ENCODE measurements at regions of chr12 and their contacts with region 1.

Region 1: DNA sequence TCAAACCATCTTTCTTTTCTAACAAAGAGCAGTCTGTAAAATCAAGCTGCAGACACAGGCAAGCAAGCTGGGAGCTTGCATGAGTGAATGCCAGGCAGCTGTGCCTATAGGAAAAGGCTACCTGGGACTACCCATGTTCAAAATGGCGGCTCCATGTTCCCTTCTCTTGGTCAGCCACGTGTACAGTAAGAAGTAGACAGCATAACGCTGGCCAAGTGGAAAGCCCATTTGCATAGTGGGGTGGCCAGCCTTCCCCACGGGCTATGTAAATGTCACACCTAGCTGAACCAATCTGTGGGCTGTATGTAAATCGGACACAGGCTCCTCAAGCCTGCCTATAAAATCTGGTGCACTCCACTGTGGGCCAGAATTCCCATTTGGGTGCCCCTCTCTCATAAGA is 117.1 kb downstream of the SYT10 start:
- DNase-seq: no peak
- ATAC-seq: no peak
- H3K4me3 ChIP-seq: no peak overlapping the region
- H3K4me3 Mint-ChIP-seq: no peak overlapping the region
- H3K27ac ChIP-seq: no peak overlapping the region
- H3K27ac Mint-ChIP-seq: no peak overlapping the region
- H3K4me1 ChIP-seq: no peaks in the 10 kb centered on the region
- H3K4me1 Mint-ChIP-seq: no peaks in the 10 kb centered on the region
- H3K27me3 ChIP-seq: no peaks in the 10 kb centered on the region
- H3K27me3 Mint-ChIP-seq: no peaks in the 10 kb centered on the region
- CTCF ChIP-seq: no peak

Region 2: DNA sequence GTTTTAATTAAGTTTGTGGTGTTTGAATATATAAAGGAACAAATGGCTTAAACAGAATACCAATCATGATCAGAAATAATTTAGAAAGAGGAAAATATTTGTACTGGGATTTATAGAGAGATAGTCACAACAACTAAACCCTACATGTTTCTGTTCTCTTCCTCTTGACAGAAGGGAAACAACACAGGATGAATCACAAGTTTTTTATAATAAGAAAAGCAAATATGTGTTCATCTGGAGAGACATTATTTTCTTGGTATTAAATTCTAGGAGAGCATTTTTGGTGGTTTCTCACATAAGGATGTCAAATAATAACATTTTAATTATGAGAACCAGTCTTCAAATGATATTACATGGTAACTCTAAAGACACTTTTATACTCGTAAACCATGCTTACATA is 193.0 kb before region 1 on chr12:
- CTCF ChIA-PET with region 1: no interaction called
- POLR2A ChIA-PET with region 1: no interaction called
- intact Hi-C with region 1: loop called in 1 of 2 experiments (anchors 5 kb)
- DNase-seq: no peak
- ATAC-seq: no peak
- H3K4me3 ChIP-seq: no peak overlapping the region
- H3K4me3 Mint-ChIP-seq: no peak overlapping the region
- H3K27ac ChIP-seq: no peak overlapping the region
- H3K27ac Mint-ChIP-seq: no peak overlapping the region
- H3K4me1 ChIP-seq: no peaks in the 10 kb centered on the region
- H3K4me1 Mint-ChIP-seq: no peaks in the 10 kb centered on the region
- H3K27me3 ChIP-seq: no peaks in the 10 kb centered on the region
- H3K27me3 Mint-ChIP-seq: no peaks in the 10 kb centered on the region
- CTCF ChIP-seq: no peak